K562 (cell line): ENCODE measurements at regions of chr14 and their contacts with region 1.

Region 1: GRCh38 chr14:100900837-100901390 is 2.6 kb downstream of the RTL1 start:
- DNase-seq: peak; percentile 68 to 75 (median 70)
- ATAC-seq: peak; percentile 89
- H3K4me3 ChIP-seq: no peak overlapping the region
- H3K27ac ChIP-seq: no peak overlapping the region
- H3K4me1 ChIP-seq: peaks cover 13 to 38% of the 10 kb centered on the region in 2 experiments
- H3K27me3 ChIP-seq: 0 out of 5 replicates have a peak, but pooled peaks cover 0 to 3% of the 10 kb centered on the region in 2 experiments
- CTCF ChIP-seq: peak; percentile 72 to 83 (median 77)
- EP300 ChIP-seq: no peak
- POLR2A ChIP-seq: no peak
- RAD21 ChIP-seq: peak; percentile 84 to 94

Region 2: GRCh38 chr14:99936747-99937474 is 964.0 kb before region 1 on chr14:
- CTCF ChIA-PET with region 1: no interaction called
- POLR2A ChIA-PET with region 1: no interaction called
- in situ Hi-C with region 1: no loop called
- intact Hi-C with region 1: no loop called
- DNase-seq: no peak
- ATAC-seq: peak; percentile 64; the same call in 2 of the 3 replicates
- H3K4me3 ChIP-seq: no peak overlapping the region
- H3K27ac ChIP-seq: no peak overlapping the region
- H3K4me1 ChIP-seq: peaks cover 0 to 6% of the 10 kb centered on the region in 2 experiments; a peak in 2 of 5 replicates
- H3K27me3 ChIP-seq: peaks cover 28 to 70% of the 10 kb centered on the region in 2 experiments; a peak in 4 of 5 replicates
- CTCF ChIP-seq: 0 out of 6 replicates have a peak, but pooled peaks of 1 of the 3 experiments have one; percentile 11
- EP300 ChIP-seq: no peak
- POLR2A ChIP-seq: no peak
- RAD21 ChIP-seq: no peak

Region 3: GRCh38 chr14:100383727-100384158 is 517.2 kb before region 1 on chr14:
- CTCF ChIA-PET with region 1: interaction called, 14 read pairs
- POLR2A ChIA-PET with region 1: no interaction called
- in situ Hi-C with region 1: no loop called
- intact Hi-C with region 1: no loop called
- DNase-seq: peak; percentile 55 to 72 (median 60)
- ATAC-seq: peak; percentile 91
- H3K4me3 ChIP-seq: no peak overlapping the region
- H3K27ac ChIP-seq: no peak overlapping the region
- H3K4me1 ChIP-seq: peaks cover 7 to 16% of the 10 kb centered on the region in 2 experiments; a peak in 3 of 5 replicates
- H3K27me3 ChIP-seq: no peaks in the 10 kb centered on the region
- CTCF ChIP-seq: peak; percentile 76 to 80 (median 79)
- EP300 ChIP-seq: no peak
- POLR2A ChIP-seq: no peak
- RAD21 ChIP-seq: peak; percentile 40 to 67

Region 4: DNA sequence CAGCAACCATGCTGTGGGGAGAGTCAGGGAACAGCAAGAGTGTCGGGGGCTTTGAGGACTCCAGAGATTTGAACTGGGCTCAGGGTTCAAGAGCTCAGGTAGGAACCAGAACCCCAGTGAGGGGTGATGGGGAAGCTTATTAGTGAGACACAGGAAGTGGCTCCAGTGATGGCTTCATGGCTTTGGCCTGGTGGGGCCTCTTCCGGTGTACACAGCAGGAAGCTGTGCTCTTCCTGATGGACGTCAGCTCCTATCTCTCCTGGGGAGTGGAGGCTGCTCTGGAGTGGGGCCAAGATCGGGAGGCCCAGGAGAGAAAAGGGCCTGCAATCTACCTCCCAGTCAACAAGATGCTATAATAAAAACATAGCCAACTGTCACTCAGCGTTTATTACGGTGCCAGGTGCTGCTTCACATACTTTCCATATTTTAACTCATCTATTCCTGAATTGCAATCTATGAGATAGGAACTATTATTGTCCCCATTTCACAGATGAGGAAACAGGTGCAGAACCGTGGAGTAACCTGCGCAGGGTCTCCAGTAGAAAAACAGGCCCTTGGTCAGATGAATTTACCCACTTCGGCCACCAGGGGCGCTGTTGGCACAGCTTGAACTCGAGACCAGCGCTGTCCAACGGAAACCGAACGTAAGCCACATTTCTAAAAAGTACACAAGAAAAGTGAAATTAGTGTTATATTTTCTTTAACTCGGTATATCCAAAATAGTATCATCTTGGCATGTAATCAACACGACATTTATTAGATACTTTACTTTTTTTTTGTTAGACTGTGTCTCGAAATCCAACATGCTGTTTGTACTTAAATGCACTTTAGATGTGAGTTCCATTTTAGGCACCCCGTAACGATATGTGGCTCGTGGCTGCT is 237.8 kb before region 1 on chr14:
- CTCF ChIA-PET with region 1: no interaction called
- POLR2A ChIA-PET with region 1: no interaction called
- in situ Hi-C with region 1: loop called (anchors 5 kb)
- intact Hi-C with region 1: loop called (anchors 5 kb)
- DNase-seq: peak; percentile 72 to 85 (median 74)
- ATAC-seq: peak; percentile 84
- H3K4me3 ChIP-seq: no peak overlapping the region
- H3K27ac ChIP-seq: peak overlapping the region; percentile 45; the same call in 2 of the 3 replicates
- H3K4me1 ChIP-seq: peaks cover 7 to 27% of the 10 kb centered on the region in 2 experiments; a peak in 4 of 5 replicates
- H3K27me3 ChIP-seq: no peaks in the 10 kb centered on the region
- CTCF ChIP-seq: peak; percentile 75 to 89 (median 78)
- EP300 ChIP-seq: no peak
- POLR2A ChIP-seq: no peak
- RAD21 ChIP-seq: peak; percentile 65 to 71

Region 5: DNA sequence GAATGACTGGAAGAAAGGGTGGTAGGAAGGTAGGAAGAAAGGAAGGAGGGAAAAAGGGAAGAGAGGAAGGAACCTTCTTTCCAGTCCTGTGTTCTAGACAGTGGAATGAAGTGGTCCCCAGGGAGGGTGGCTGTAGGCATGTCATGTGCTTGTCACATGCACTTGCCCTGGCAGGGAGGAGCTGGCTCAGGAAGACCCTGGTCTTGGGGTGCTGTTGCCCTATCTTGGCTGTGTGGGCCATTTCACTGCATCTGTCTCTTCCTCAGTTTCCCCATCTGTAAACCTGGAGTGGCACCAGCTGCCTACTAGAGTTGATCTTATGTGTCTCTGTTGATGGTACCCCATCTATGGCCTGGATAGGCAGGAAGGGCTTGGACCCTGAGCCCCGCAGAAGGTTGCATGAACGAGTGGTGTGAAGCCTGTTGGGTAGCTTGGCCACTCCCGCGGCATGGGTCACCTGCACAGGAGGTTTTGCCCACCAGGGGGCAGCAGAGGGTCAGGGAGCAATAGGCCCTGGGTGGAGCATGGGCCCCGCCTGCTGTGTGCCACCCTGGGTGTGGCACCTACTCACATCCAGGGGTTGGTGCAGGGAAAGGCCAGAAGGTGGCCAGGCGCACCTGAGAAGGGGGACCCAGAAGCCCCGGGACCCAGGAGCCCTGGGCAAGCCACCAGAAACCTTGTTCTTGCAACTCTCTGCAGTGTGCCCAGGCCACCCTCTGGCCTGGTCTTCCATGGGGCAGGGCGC is 49.9 kb before region 1 on chr14:
- CTCF ChIA-PET with region 1: interaction called, 13 read pairs
- POLR2A ChIA-PET with region 1: no interaction called
- in situ Hi-C with region 1: no loop called
- intact Hi-C with region 1: loop called (anchors 1 kb)
- DNase-seq: peak; percentile 73 to 78 (median 76)
- ATAC-seq: peak; percentile 99
- H3K4me3 ChIP-seq: no peak overlapping the region
- H3K27ac ChIP-seq: no peak overlapping the region
- H3K4me1 ChIP-seq: peaks cover 2 to 14% of the 10 kb centered on the region in 2 experiments; a peak in 3 of 5 replicates
- H3K27me3 ChIP-seq: no peaks in the 10 kb centered on the region
- CTCF ChIP-seq: peak; percentile 82 to 87 (median 83)
- EP300 ChIP-seq: no peak
- POLR2A ChIP-seq: no peak
- RAD21 ChIP-seq: peak; percentile 72 to 89

Region 6: GRCh38 chr14:100930260-100930659 is 29.3 kb after region 1 on chr14:
- CTCF ChIA-PET with region 1: no interaction called
- POLR2A ChIA-PET with region 1: no interaction called
- in situ Hi-C with region 1: no loop called
- intact Hi-C with region 1: no loop called
- DNase-seq: no peak
- ATAC-seq: no peak
- H3K4me3 ChIP-seq: no peak overlapping the region
- H3K27ac ChIP-seq: no peak overlapping the region
- H3K4me1 ChIP-seq: no peaks in the 10 kb centered on the region
- H3K27me3 ChIP-seq: no peaks in the 10 kb centered on the region
- CTCF ChIP-seq: no peak
- EP300 ChIP-seq: no peak
- POLR2A ChIP-seq: no peak
- RAD21 ChIP-seq: no peak

Region 7: DNA sequence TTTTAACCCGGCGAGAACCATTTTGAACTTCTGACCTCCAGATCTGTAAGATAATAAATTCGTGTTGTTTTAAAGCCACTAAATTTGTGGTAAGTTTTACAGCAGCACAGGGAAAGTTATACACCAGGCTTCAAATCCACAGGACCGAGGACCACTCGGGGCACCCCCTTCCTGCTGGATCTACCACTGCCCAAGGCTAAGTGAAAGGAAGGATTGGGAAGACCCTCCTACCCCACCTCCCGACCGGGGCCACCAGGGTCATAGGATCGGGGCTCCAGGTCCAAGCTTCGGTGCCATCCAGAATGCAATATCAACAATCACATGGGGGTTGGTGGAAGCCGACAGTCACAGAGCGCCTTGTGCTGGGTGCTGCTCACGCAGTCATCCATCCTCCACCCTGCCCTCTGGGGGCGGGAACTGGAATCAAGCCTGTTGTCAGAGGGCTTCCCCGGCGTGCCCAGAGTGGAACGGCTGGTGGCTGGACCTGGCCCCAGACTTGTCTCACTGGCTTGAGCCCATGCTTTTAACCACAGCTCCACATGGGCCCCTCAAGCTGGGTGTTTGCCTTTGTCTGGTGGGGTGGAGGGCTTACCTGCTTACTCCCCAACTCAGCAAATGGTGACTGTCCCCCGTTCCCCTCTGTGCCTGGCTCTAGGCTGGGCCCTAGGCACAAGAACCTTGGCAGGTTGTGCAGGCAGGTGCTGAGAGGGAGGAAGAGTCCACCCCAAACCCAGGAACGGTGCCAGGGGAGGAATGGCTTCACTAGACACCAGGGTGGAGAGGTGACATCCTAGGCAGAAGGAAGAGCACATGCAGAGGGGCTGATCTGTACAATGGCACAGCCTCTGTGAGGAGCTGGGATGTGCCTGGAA is 182.9 kb after region 1 on chr14:
- CTCF ChIA-PET with region 1: no interaction called
- POLR2A ChIA-PET with region 1: no interaction called
- in situ Hi-C with region 1: no loop called
- intact Hi-C with region 1: loop called (anchors 10 kb)
- DNase-seq: peak in 2 of 4 experiments; percentile 33 to 41
- ATAC-seq: peak; percentile 86
- H3K4me3 ChIP-seq: no peak overlapping the region
- H3K27ac ChIP-seq: no peak overlapping the region
- H3K4me1 ChIP-seq: no peaks in the 10 kb centered on the region
- H3K27me3 ChIP-seq: peaks cover 0 to 43% of the 10 kb centered on the region in 2 experiments; a peak in 2 of 5 replicates
- CTCF ChIP-seq: peak; percentile 36 to 55 (median 44); a peak in 5 of 6 replicates
- EP300 ChIP-seq: no peak
- POLR2A ChIP-seq: no peak
- RAD21 ChIP-seq: peak in 1 of 2 experiments; percentile 24; a peak in 1 of 4 replicates

Region 8: DNA sequence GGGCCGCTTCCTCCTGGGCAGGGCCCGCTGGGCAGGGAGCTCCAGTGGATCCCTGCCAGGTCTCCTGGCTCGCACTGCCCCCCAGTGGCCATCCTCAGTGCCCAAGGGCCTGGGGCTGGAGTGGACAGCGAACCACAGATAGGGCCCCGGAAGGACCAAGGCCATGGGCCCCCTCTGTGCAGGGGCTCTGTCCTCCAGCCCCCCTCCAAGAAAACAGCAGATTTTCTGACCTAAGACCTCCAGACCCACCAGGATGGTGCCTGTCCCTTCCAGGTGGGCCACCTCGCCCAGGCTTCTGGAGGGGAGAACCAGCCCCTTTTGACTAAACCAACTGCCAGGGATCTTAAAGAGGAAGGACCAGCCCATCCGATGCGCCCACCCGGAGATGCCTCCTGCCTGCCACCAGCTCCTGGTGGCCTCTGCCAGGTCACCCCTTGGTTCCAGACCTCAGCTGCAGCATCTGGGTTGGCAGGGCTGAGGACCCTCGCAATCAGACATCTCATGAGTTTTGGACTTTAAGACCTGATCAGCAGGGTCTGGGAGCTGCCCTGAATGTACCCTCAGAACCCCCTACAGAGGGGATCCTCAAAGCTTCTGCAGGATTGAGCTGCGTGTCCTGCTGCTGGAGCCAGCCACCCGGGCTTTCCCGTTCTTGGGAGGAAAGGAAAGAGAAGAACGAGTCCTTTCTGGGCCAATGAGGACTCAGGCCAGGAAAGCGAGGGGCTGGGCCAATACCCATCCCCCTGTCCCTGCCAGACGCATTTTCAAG is 334.6 kb after region 1 on chr14:
- CTCF ChIA-PET with region 1: no interaction called
- POLR2A ChIA-PET with region 1: no interaction called
- in situ Hi-C with region 1: no loop called
- intact Hi-C with region 1: loop called (anchors 5 kb)
- DNase-seq: peak; percentile 59 to 74 (median 70)
- ATAC-seq: peak; percentile 99
- H3K4me3 ChIP-seq: no peak overlapping the region
- H3K27ac ChIP-seq: no peak overlapping the region
- H3K4me1 ChIP-seq: peaks cover 0 to 11% of the 10 kb centered on the region in 2 experiments; a peak in 1 of 5 replicates
- H3K27me3 ChIP-seq: peaks cover 2 to 31% of the 10 kb centered on the region in 2 experiments; a peak in 2 of 5 replicates
- CTCF ChIP-seq: peak; percentile 65 to 67 (median 65)
- EP300 ChIP-seq: no peak
- POLR2A ChIP-seq: no peak
- RAD21 ChIP-seq: peak; percentile 57 to 73

Region 9: DNA sequence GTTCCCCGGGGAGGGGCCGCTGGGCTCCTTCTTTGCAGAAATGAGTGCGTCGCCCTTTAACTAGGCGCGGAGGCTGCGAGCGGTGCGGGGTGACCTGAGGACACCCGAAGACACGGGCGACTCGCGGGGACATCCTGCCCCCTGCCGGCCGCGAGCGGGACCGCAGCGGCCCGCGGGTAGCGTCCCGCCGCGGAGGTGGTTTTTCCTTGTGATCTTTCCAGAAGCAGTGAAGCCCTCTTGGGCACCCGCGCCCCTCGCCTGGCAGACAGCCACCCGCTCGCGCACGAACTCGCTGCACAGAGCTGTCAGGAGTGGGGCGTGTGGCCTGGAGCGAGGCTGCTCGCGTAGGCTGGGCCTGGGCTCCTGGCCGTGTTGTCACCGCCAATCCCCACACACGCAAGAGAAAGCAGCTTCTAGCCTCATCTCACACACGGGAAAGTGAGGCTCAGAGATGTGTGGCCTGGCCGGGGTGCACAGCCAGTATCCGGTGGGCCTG is 727.6 kb after region 1 on chr14:
- CTCF ChIA-PET with region 1: no interaction called
- POLR2A ChIA-PET with region 1: no interaction called
- in situ Hi-C with region 1: loop called (anchors 25 kb)
- intact Hi-C with region 1: loop called (anchors 5 kb)
- DNase-seq: peak; percentile 81 to 84 (median 82)
- ATAC-seq: peak; percentile 92
- H3K4me3 ChIP-seq: no peak overlapping the region
- H3K27ac ChIP-seq: peak overlapping the region; percentile 50; the same call in 2 of the 3 replicates
- H3K4me1 ChIP-seq: peaks cover 6 to 34% of the 10 kb centered on the region in 2 experiments; a peak in 4 of 5 replicates
- H3K27me3 ChIP-seq: no peaks in the 10 kb centered on the region
- CTCF ChIP-seq: peak; percentile 83 to 85 (median 85)
- EP300 ChIP-seq: peak; percentile 46
- POLR2A ChIP-seq: no peak
- RAD21 ChIP-seq: peak; percentile 85 to 91